ENCODE measurements at regions of chr3 and their contacts with region 1.

Region 1: GRCh38 chr3:177284383-177284881 is 87.2 kb upstream of the TBL1XR1 start:
- DNase-seq: no peak
- H3K4me3 ChIP-seq: no peak overlapping the region
- H3K27ac ChIP-seq: no peak overlapping the region
- H3K4me1 ChIP-seq: peaks cover 59% of the 10 kb centered on the region
- H3K27me3 ChIP-seq: no peaks in the 10 kb centered on the region
- CTCF ChIP-seq: no peak

Region 2: DNA sequence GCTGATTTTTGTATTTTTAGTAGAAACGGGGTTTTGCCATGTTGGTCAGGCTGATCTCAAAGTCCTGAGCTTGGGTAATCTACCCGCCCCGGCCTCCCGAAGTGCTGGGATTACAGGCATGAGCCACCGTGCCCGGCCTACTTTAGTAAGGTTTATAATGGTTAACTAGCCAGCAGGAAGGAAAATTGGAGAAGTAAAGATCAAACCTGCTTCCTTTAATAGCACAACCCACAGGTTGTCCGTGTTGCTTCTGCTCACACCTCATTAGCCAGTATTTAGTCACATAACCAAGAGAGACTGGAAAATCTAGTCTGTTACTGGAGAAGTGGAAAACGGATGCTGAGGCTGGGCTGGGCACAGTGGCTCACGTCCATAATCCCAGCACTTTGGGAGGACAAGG is 35.2 kb before region 1 on chr3:
- CTCF ChIA-PET with region 1: no interaction called
- POLR2A ChIA-PET with region 1: no interaction called
- intact Hi-C with region 1: loop called (anchors 5 kb)
- DNase-seq: peak; percentile 37 to 94
- H3K4me3 ChIP-seq: no peak overlapping the region
- H3K27ac ChIP-seq: peak overlapping the region; percentile 62
- H3K4me1 ChIP-seq: peaks cover 18% of the 10 kb centered on the region
- H3K27me3 ChIP-seq: no peaks in the 10 kb centered on the region
- CTCF ChIP-seq: no peak

Region 3: DNA sequence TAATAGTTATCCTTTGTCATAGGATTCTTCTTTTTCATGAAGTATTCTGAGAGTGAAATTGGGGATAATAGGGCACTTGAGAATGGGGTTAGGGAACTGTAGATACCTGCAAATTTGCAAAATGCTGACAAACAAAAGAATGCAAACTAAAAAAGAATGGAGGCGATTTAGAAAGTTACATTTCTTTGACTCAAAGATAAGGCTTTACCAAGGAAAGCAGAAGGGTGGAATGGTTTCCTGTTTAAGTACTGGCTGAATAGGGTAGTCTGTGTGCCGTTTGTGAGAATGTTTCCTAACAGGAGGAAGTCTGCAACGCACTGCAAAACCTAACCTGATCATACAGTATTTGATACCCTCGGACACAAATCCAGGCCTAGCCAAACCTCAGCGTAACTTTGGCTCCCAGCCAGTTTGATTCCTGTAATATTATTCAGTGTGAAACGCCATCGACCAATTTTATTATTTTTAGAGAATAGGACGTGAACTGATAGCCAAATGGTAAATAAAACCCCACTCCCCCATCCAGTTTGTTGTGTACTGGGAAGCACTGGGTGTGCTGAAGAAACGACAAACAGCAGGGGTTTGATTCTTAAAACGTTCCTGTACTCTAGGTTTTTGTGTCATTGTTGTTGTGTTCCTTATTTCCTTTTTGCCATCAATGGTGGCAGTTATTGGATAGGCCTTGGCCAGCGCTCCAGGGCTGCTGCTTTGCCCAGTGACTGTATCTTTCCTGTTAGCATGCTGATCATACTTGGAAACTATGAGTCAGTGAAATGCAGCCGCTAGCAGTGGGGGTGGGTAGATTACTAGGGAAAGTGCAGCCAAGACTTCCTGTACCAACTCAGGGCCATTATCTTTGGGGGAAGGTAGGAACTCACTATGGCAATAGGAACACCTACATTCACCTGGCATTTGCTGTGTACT is 60.9 kb after region 1 on chr3:
- CTCF ChIA-PET with region 1: no interaction called
- POLR2A ChIA-PET with region 1: no interaction called
- intact Hi-C with region 1: loop called (anchors 2 kb)
- DNase-seq: peak; percentile 93 to 98
- H3K4me3 ChIP-seq: peak overlapping the region; percentile 6; the same call in 1 of the 2 replicates
- H3K27ac ChIP-seq: peak overlapping the region; percentile 87
- H3K4me1 ChIP-seq: peaks cover 28% of the 10 kb centered on the region
- H3K27me3 ChIP-seq: no peaks in the 10 kb centered on the region
- CTCF ChIP-seq: no peak

Region 4: GRCh38 chr3:177744873-177745606 is 460.6 kb after region 1 on chr3:
- CTCF ChIA-PET with region 1: no interaction called
- POLR2A ChIA-PET with region 1: no interaction called
- intact Hi-C with region 1: loop called (anchors 10 kb)
- DNase-seq: peak; percentile 72 to 75
- H3K4me3 ChIP-seq: no peak overlapping the region
- H3K27ac ChIP-seq: no peak overlapping the region
- H3K4me1 ChIP-seq: peaks cover 13% of the 10 kb centered on the region
- H3K27me3 ChIP-seq: no peaks in the 10 kb centered on the region
- CTCF ChIP-seq: no peak

Region 5: GRCh38 chr3:177764377-177764912 is 480.0 kb after region 1 on chr3:
- CTCF ChIA-PET with region 1: no interaction called
- POLR2A ChIA-PET with region 1: no interaction called
- intact Hi-C with region 1: no loop called
- DNase-seq: peak in 1 of 2 experiments; percentile 30
- H3K4me3 ChIP-seq: no peak overlapping the region
- H3K27ac ChIP-seq: no peak overlapping the region
- H3K4me1 ChIP-seq: peaks cover under 1% of the 10 kb centered on the region; the same call in 1 of the 2 replicates
- H3K27me3 ChIP-seq: no peaks in the 10 kb centered on the region
- CTCF ChIP-seq: no peak

Region 6: GRCh38 chr3:177946936-177947335 is 662.5 kb after region 1 on chr3:
- CTCF ChIA-PET with region 1: no interaction called
- POLR2A ChIA-PET with region 1: no interaction called
- intact Hi-C with region 1: no loop called
- DNase-seq: no peak
- H3K4me3 ChIP-seq: no peak overlapping the region
- H3K27ac ChIP-seq: no peak overlapping the region
- H3K4me1 ChIP-seq: 0 out of 2 replicates have a peak, but pooled peaks cover 11% of the 10 kb centered on the region
- H3K27me3 ChIP-seq: no peaks in the 10 kb centered on the region
- CTCF ChIP-seq: no peak

Measured in PC-9 (cell line).